ENCODE measurements at regions of chr17 and their contacts with region 1.

Region 1: DNA sequence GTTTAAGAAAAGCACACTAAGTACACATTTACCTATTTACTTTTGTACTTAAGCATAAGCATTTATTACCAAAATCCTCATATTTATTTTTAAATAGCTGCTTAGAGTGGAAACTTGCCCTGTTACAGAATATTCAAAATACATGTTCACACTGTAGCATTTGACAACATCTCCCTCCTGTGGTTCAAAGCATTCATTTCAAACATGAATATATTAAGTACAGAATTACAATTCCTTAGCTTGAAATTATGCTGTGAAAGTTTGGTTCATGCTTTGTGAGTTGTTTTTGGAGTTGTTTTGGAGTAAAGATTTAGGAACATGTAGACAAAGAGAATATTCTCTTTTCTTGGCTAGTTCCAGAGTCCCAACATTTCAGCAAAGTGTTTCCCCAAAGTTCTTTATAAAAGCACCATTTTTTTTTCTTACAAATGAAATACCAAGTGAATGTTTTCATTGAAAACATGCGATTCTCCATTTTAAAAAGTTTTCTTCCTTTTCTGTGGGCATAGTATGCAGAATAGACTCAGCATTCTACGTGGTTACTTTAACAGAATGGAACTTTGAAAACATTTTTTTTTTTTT is 33.2 kb downstream of the TUBD1 start:
- DNase-seq: peak; percentile 76
- H3K4me3 ChIP-seq: no peak overlapping the region
- H3K27ac ChIP-seq: no peak overlapping the region
- H3K4me1 ChIP-seq: peaks cover 14% of the 10 kb centered on the region
- H3K27me3 ChIP-seq: no peaks in the 10 kb centered on the region
- CTCF ChIP-seq: peak; percentile 29 to 45
- POLR2A ChIP-seq: no peak

Region 2: DNA sequence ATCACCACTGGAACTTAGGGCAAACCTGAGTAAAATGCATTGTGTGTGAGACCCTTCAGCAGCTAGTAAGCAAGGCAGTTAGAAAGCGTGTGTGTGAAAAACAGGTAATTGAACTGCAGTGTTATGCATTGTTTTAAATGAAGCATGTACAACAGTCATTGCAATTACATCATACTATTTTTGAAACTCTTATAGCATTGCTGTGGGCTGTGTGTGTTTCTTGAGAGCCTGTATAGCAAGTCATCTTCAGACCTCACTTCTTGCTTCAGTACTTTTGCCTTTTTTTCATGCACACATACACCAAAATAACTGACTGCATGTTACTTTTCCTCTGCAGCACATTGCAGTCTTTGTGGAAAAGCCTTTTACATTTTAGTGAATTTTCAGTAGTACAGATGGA is 171.5 kb before region 1 on chr17:
- CTCF ChIA-PET with region 1: interaction called, 25 read pairs
- POLR2A ChIA-PET with region 1: no interaction called
- dilution Hi-C with region 1: no loop called
- intact Hi-C with region 1: no loop called
- DNase-seq: no peak
- H3K4me3 ChIP-seq: no peak overlapping the region
- H3K27ac ChIP-seq: no peak overlapping the region
- H3K4me1 ChIP-seq: no peaks in the 10 kb centered on the region
- H3K27me3 ChIP-seq: no peaks in the 10 kb centered on the region
- CTCF ChIP-seq: no peak
- POLR2A ChIP-seq: no peak

Region 3: GRCh38 chr17:59746849-59747445 is 112.6 kb before region 1 on chr17:
- CTCF ChIA-PET with region 1: no interaction called
- POLR2A ChIA-PET with region 1: interaction called, 5 read pairs
- dilution Hi-C with region 1: no loop called
- intact Hi-C with region 1: loop called (anchors 1 kb)
- DNase-seq: peak; percentile 68
- H3K4me3 ChIP-seq: no peak overlapping the region
- H3K27ac ChIP-seq: no peak overlapping the region
- H3K4me1 ChIP-seq: no peaks in the 10 kb centered on the region
- H3K27me3 ChIP-seq: no peaks in the 10 kb centered on the region
- CTCF ChIP-seq: peak; percentile 30 to 43
- POLR2A ChIP-seq: no peak

Region 4: GRCh38 chr17:59829217-59830006 is 30.1 kb before region 1 on chr17:
- CTCF ChIA-PET with region 1: interaction called, 17 read pairs
- POLR2A ChIA-PET with region 1: interaction called, 3 read pairs
- dilution Hi-C with region 1: no loop called
- intact Hi-C with region 1: no loop called
- DNase-seq: peak; percentile 99
- H3K4me3 ChIP-seq: peak overlapping the region in 1 of 3 experiments; percentile 28
- H3K27ac ChIP-seq: peak overlapping the region; percentile 97
- H3K4me1 ChIP-seq: peaks cover 32% of the 10 kb centered on the region
- H3K27me3 ChIP-seq: no peaks in the 10 kb centered on the region
- CTCF ChIP-seq: no peak
- POLR2A ChIP-seq: peak; percentile 15

Region 5: DNA sequence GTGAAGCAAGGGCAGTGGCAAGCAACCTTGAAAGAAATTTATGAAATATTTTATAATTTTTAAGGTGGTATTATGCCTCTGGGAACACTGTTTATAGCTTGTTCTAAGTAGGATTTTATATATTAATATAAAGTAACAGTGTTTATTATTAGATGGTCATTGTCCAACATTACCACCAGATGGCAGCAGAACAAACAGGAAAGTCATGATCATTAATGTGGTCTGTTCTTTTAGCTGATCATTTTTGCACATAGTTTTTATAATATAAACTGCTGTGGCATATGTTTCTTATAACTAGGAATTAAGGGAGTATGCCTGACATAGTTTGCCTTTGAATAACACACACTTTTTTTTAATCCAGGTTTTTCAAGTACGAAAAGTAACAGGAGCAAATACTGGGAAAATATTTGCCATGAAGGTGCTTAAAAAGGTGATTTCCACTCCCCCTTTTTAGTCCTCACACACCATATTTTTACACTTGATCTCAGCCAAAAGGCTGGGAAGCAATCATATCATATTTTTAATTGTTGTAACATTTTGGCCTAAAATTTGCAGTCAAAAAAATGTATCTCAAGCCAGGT is 54.8 kb after region 1 on chr17:
- CTCF ChIA-PET with region 1: interaction called, 10 read pairs
- POLR2A ChIA-PET with region 1: no interaction called
- dilution Hi-C with region 1: no loop called
- intact Hi-C with region 1: no loop called
- DNase-seq: peak; percentile 46
- H3K4me3 ChIP-seq: no peak overlapping the region
- H3K27ac ChIP-seq: no peak overlapping the region
- H3K4me1 ChIP-seq: no peaks in the 10 kb centered on the region
- H3K27me3 ChIP-seq: no peaks in the 10 kb centered on the region
- CTCF ChIP-seq: peak; percentile 30 to 33
- POLR2A ChIP-seq: no peak

Measured in endothelial cell of umbilical vein (primary cell).